ENCODE measurements at regions of chr1 and their contacts with region 1.

Region 1: DNA sequence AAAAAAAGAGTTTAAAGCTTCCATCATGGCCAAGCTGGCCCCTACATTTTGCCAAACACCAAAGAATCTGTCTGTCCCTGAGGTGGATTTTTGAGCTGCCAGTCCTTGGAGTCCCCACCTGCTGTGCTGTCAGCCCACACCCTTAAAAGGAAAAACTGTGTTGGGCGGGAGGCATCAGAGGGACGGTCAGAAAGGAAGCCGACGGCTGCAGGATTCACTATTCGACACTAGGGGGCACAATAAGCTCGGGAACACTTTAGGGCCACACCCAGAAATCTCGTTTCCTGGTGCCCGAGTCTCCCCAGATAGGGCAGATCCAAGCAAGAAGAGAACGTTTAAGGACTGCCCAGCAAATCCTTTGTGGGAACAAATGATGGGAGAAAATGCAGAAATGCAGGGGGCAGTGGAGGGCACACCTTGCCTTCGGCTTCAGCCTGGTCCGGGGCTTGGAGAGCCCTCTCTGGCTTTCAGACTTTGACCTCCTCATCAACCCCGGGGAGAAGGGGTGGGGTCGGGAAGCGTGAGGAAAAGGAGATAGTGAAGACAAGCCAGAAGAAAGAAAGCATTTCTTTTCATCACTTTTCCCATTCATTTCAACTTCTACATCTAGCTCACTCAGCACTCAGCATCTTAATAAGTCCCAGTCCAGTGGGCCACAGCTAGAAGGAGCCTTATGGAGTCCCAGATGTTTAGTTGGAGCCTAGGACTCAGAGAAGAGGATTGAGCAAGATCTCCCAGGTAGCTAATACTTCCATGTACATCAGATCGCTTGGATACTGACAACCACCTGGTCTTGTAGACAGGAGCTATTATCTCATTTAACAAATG is 5.0 kb upstream of the CTTNBP2NL start:
- DNase-seq: peak; percentile 84
- H3K4me3 ChIP-seq: peak overlapping the region; percentile 45
- H3K27ac ChIP-seq: peak overlapping the region; percentile 66
- H3K27me3 ChIP-seq: peaks cover 3% of the 10 kb centered on the region
- CTCF ChIP-seq: peak; percentile 88

Region 2: DNA sequence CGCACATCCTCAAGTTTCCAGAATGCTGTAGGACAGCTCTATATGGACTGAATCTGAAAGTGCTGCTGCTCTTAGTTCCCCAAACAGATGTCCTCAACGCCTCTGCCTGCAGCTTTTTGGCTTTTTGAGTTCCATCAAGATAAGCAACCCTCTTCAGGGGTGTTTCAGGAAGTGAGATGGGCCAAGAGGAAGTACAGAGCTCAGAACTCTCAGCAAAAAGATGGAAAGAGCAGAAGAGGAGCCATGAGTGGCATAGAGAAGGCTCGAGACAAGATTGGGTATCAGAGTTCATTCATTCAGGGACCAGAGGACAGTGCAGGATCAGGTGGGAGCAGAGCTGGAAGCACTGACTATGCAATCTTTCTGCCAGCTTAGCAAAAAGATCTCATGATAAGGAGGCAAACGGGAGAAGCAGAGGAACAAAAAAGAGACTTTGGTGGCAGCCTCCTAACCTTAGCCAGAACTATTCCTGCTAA is 887.4 kb before region 1 on chr1 and contains the starts of genes ADORA3 and TMIGD3:
- CTCF ChIA-PET with region 1: no interaction called
- POLR2A ChIA-PET with region 1: no interaction called
- DNase-seq: no peak
- H3K4me3 ChIP-seq: no peak within 1 kb of the TSS
- H3K27ac ChIP-seq: no peak within 1 kb of the TSS
- H3K27me3 ChIP-seq: peaks cover 15% of the 10 kb centered on the region
- CTCF ChIP-seq: no peak
- polyA plus RNA-seq, gene ADORA3: not detected in 2 replicates
- polyA plus RNA-seq, gene TMIGD3: 0.11 TPM in 1 of 2 replicates, not detected in the other

Region 3: GRCh38 chr1:112358798-112359408 is 32.1 kb before region 1 on chr1:
- CTCF ChIA-PET with region 1: interaction called, 10 read pairs
- POLR2A ChIA-PET with region 1: no interaction called
- DNase-seq: peak; percentile 15
- H3K4me3 ChIP-seq: no peak overlapping the region
- H3K27ac ChIP-seq: peak overlapping the region; percentile 93
- H3K27me3 ChIP-seq: peaks cover 33% of the 10 kb centered on the region
- CTCF ChIP-seq: peak; percentile 86

Region 4: GRCh38 chr1:112445596-112445995 is 54.6 kb after region 1 on chr1:
- CTCF ChIA-PET with region 1: interaction called, 10 read pairs
- POLR2A ChIA-PET with region 1: interaction called, 6 read pairs
- DNase-seq: no peak
- H3K4me3 ChIP-seq: no peak overlapping the region
- H3K27ac ChIP-seq: no peak overlapping the region
- H3K27me3 ChIP-seq: no peaks in the 10 kb centered on the region
- CTCF ChIP-seq: no peak

Region 5: GRCh38 chr1:112472142-112472541 is 81.2 kb after region 1 on chr1:
- CTCF ChIA-PET with region 1: interaction called, 125 read pairs
- POLR2A ChIA-PET with region 1: no interaction called
- DNase-seq: no peak
- H3K4me3 ChIP-seq: no peak overlapping the region
- H3K27ac ChIP-seq: no peak overlapping the region
- H3K27me3 ChIP-seq: no peaks in the 10 kb centered on the region
- CTCF ChIP-seq: no peak

Region 6: DNA sequence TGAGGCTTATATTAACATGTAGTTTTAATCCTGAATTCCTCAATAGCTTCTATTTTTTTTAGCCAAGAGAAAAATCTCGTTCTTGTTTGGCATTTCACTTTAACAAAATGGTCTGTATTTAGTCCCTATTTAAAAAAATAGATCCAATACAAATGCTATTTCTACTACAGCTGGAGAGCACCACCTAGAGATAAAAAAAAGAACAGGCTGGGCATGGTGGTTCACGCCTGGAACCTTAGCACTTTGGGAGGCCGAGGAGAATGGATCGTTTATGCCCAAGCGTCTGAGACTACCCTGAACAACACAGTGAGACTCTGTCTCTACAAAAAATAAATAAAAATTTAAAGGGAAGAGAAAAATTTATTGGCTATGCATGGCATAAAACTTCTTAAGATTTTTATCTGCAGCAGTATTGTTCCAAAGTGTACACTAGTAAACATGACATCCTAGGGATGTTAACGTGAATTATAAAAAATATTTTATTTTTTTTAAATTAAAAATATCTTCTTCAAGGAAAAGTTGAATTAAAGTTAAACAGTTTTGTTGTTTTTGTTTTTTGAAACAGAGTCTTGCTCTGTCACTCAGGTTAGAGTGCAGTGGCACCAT is 223.6 kb after region 1 on chr1:
- CTCF ChIA-PET with region 1: interaction called, 130 read pairs
- POLR2A ChIA-PET with region 1: interaction called, 11 read pairs
- DNase-seq: peak; percentile 11
- H3K4me3 ChIP-seq: no peak overlapping the region
- H3K27ac ChIP-seq: no peak overlapping the region
- H3K27me3 ChIP-seq: no peaks in the 10 kb centered on the region
- CTCF ChIP-seq: peak; percentile 82

Region 7: GRCh38 chr1:112706908-112707663 is 316.1 kb after region 1 on chr1 and contains the start of gene RHOC:
- CTCF ChIA-PET with region 1: interaction called, 15 read pairs
- POLR2A ChIA-PET with region 1: interaction called, 11 read pairs
- DNase-seq: no peak
- H3K4me3 ChIP-seq: peak within 1 kb of the TSS; percentile 88
- H3K27ac ChIP-seq: peak within 1 kb of the TSS; percentile 74
- H3K27me3 ChIP-seq: no peaks in the 10 kb centered on the region
- CTCF ChIP-seq: peak; percentile 94
- polyA plus RNA-seq, gene RHOC: 574 and 734 TPM in 2 replicates